Activated B cell treated with CpG ODN at 0.5 μM for 24 hours (primary cell): ENCODE measurements at regions of chrX and their contacts with region 1.

Region 1: DNA sequence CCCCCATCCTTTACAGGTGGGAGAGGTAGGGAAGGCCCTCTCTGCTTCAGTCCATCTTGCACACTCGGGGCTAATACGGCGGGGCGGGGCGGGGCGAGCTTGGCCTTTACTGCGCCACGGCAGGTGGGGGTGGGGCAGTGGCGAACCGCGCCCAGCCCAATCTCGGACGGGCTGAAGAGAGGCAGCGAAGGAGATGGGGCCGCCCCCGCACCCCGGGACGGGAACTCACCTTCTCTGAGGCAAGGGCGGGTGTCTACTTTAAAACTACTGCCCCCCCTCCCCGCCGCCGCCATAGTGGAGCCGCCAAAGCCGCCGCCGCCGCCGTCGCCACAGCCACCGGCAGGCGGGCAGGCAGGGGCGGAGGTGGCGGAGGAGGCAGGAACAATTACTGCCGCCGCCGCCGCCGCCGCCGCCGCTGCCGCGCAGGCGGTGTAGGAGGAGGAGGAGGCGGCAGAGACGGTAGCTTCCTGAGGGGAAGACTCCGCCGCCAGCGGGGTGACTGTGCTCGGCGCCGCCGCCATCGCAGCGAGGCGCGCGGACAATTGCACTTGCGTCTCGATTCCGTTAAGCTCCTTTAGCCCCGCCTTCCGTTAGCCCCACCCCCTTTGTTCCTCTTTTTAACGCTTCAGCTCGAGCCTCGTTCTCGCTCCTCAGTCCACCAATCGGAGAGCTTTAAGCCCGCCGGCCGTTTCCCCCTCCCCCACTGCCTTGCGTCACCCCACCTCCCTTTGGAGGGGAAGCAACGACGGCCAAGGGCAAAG is at the start of gene ZMAT1:
- DNase-seq: peak; percentile 74
- ATAC-seq: peak; percentile 85
- H3K4me3 Mint-ChIP-seq: peak within 1 kb of the TSS; percentile 87
- H3K27ac Mint-ChIP-seq: peak within 1 kb of the TSS; percentile 93
- H3K4me1 Mint-ChIP-seq: peaks cover 12% of the 10 kb centered on the region
- H3K27me3 Mint-ChIP-seq: no peaks in the 10 kb centered on the region
- CTCF ChIP-seq: no peak
- total RNA-seq, gene ZMAT1: 14.8 and 19.8 TPM in 2 replicates

Region 2: GRCh38 chrX:101799387-101799786 is 132.3 kb before region 1 on chrX:
- CTCF ChIA-PET with region 1: no interaction called
- POLR2A ChIA-PET with region 1: no interaction called
- intact Hi-C with region 1: loop called (anchors 1 kb)
- DNase-seq: peak; percentile 21
- ATAC-seq: peak; percentile 100
- H3K4me3 Mint-ChIP-seq: peak overlapping the region; percentile 50
- H3K27ac Mint-ChIP-seq: no peak overlapping the region
- H3K4me1 Mint-ChIP-seq: no peaks in the 10 kb centered on the region
- H3K27me3 Mint-ChIP-seq: peaks cover 1% of the 10 kb centered on the region
- CTCF ChIP-seq: peak; percentile 27

Region 3: GRCh38 chrX:102976793-102977495 is 1045.3 kb after region 1 on chrX:
- CTCF ChIA-PET with region 1: no interaction called
- POLR2A ChIA-PET with region 1: no interaction called
- intact Hi-C with region 1: no loop called
- DNase-seq: no peak
- ATAC-seq: no peak
- H3K4me3 Mint-ChIP-seq: no peak overlapping the region
- H3K27ac Mint-ChIP-seq: no peak overlapping the region
- H3K4me1 Mint-ChIP-seq: no peaks in the 10 kb centered on the region
- H3K27me3 Mint-ChIP-seq: no peaks in the 10 kb centered on the region
- CTCF ChIP-seq: no peak